Astrocyte of the cerebellum (primary cell): ENCODE measurements at regions of chr14 and their contacts with region 1.

Region 1: GRCh38 chr14:61234215-61234916 is 46.8 kb downstream of the TMEM30B start:
- DNase-seq: no peak
- H3K4me3 ChIP-seq: no peak overlapping the region
- CTCF ChIP-seq: no peak

Region 2: DNA sequence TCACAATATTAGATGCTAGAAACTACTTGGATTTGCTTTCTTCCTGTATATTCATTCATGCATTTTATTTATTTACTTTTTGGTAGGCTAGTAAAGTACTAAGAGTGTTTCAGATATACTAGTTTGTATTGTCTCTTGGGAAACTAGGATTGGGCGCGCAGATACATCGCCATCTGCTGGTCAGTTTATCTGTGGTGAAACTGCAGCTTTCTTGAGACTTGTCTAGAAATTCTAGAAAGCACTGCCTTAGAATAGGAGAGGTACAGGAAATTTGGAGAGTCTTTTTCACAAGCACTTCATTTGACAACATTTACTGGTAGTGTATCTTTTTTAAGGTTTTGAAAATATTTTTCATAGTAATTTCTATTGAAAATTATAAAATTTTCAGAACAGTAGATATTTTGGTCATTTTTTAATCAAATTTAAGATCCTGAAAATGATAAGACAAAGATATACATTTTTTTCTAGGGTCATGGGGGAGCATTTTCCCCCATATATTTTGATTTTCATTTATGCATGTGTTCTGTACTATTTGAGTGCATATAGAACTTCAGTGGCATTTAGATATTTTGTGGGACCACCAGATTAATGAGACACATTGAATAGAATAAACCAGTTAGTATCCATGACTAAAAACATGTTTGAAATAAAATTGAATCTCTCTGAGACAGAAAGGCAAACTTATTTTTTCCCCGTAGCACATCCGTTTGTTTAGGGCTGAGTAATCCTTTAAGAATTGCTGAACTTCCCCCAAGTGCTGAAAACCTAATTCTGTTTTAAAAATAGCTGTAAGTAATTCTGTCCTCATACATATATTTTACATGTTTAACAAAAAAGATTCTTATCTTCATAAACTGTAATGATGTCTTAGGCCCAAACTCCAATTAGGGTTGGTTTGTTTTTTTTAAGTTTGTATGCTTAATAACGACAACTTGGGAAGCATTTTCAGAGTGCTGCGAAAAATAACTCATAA is 208.8 kb before region 1 on chr14:
- in situ Hi-C with region 1: loop called (anchors 10 kb)
- DNase-seq: peak; percentile 69
- H3K4me3 ChIP-seq: no peak overlapping the region
- CTCF ChIP-seq: peak; percentile 88

Region 3: GRCh38 chr14:61140872-61141271 is 93.5 kb before region 1 on chr14:
- in situ Hi-C with region 1: loop called (anchors 5 kb)
- DNase-seq: peak; percentile 86
- H3K4me3 ChIP-seq: no peak overlapping the region
- CTCF ChIP-seq: no peak